Naive thymus-derived CD8-positive, alpha-beta T cell (primary cell): ENCODE measurements at regions of chr1 and their contacts with region 1.

Region 1: GRCh38 chr1:152001391-152002249 is 8.0 kb upstream of the S100A10 start:
- DNase-seq: peak; percentile 56 to 86 (median 70)
- ATAC-seq: peak; percentile 77 to 81
- H3K4me3 Mint-ChIP-seq: no peak overlapping the region
- H3K27ac Mint-ChIP-seq: no peak overlapping the region
- H3K4me1 Mint-ChIP-seq: peaks cover 0 to 5% (median under 1%) of the 10 kb centered on the region in 4 donors
- H3K27me3 Mint-ChIP-seq: peaks cover 2 to 18% (median 7%) of the 10 kb centered on the region in 5 donors

Region 2: GRCh38 chr1:151968058-151968457 is 33.6 kb before region 1 on chr1:
- POLR2A ChIA-PET with region 1: interaction called, 18 read pairs
- DNase-seq: peak in 9 of 10 donors; percentile 34 to 81 (median 63)
- ATAC-seq: peak; percentile 99 to 100
- H3K4me3 Mint-ChIP-seq: peak overlapping the region in 1 of 10 donors; percentile 30
- H3K27ac Mint-ChIP-seq: peak overlapping the region in 1 of 10 donors; percentile 48
- H3K4me1 Mint-ChIP-seq: peaks cover 4 to 16% (median 10%) of the 10 kb centered on the region in 4 donors
- H3K27me3 Mint-ChIP-seq: peaks cover 0 to 9% (median 4%) of the 10 kb centered on the region in 5 donors